GM23248 (cell line): ENCODE measurements at regions of chr1 and their contacts with region 1.

Region 1: DNA sequence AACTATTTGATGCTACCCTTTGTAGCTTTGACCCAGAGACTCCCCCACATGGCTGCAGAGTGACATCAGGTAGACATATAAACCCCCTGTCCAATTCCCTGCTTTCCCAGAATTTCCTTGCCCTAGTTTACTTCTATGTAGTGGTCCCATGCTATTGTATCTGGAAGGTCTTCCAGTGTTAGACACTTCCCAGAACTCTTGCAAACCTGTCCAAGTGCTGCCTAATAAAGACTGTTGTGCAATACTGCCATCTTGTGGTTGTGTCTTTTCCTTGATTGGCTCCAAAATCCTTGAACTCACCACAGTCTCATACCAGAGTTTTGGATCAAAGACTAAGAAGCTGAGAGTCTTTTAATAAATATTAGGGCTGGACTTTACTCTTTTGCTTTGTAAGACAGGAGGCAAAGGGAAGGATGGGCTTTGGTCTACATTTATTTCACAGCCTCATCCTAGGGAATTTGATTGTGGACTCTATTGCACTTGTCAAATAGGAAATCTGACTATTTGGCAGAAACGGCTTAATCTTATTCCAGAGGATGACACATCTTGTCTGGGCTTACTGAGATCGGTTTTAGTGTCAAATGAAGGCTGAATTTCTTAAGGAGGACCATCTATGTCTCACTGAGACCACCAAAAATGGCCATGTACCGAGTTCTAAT is 169.9 kb downstream of the LRRC7 start:
- DNase-seq: peak; percentile 75
- H3K4me3 ChIP-seq: no peak overlapping the region
- H3K27ac ChIP-seq: no peak overlapping the region
- H3K4me1 ChIP-seq: no peaks in the 10 kb centered on the region
- H3K27me3 ChIP-seq: no peaks in the 10 kb centered on the region

Region 2: GRCh38 chr1:68470388-68470970 is 1267.2 kb before region 1 on chr1:
- in situ Hi-C with region 1: loop called (anchors 25 kb)
- DNase-seq: peak; percentile 57
- H3K4me3 ChIP-seq: no peak overlapping the region
- H3K27ac ChIP-seq: no peak overlapping the region
- H3K4me1 ChIP-seq: no peaks in the 10 kb centered on the region
- H3K27me3 ChIP-seq: no peaks in the 10 kb centered on the region